ENCODE measurements at regions of chr4 and their contacts with region 1.

Region 1: GRCh38 chr4:81351654-81352445 is 119.9 kb downstream of the RASGEF1B start:
- DNase-seq: peak; percentile 16 to 71 (median 52)
- H3K4me3 ChIP-seq: no peak overlapping the region
- H3K27ac ChIP-seq: no peak overlapping the region
- H3K4me1 ChIP-seq: no peaks in the 10 kb centered on the region
- H3K27me3 ChIP-seq: no peaks in the 10 kb centered on the region
- CTCF ChIP-seq: peak in 2 of 3 donors; percentile 50 to 58
- EP300 ChIP-seq: no peak
- POLR2A ChIP-seq: no peak

Region 2: DNA sequence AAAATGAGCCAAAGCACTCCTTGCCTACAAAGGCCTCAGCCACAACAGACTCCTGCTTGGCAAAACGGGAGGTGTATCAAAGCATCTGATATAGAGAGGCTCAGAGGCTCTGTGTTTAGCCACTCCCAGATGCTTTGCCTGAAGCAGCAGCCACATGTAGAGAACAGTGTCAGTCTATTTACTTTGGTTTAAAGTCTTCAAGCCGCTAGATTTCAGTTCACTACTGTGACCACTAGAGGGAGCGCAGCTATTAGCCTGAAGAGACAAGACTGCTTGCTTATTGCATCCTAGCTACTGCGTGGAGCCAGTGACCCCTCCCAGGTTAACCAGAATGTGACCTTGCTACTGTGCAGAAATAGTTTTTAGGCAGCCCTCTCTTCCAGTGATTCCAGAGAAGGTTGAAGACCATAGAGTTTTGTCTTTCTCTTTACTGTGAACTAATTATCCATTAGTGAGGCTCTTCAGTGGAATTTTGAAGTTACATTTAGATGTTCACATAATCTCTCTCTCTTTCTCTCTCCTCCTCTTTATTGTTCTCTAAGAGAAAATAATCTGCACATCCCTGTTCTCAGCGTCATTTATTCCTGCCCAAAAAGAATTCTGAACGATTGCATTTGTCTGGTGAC is 282.0 kb before region 1 on chr4:
- intact Hi-C with region 1: loop called in 1 of 4 experiments (anchors 5 kb)
- DNase-seq: peak in 4 of 5 donors; percentile 23 to 48 (median 31)
- H3K4me3 ChIP-seq: no peak overlapping the region
- H3K27ac ChIP-seq: no peak overlapping the region
- H3K4me1 ChIP-seq: no peaks in the 10 kb centered on the region
- H3K27me3 ChIP-seq: no peaks in the 10 kb centered on the region
- CTCF ChIP-seq: peak; percentile 23 to 69 (median 62)
- EP300 ChIP-seq: no peak
- POLR2A ChIP-seq: no peak

Region 3: DNA sequence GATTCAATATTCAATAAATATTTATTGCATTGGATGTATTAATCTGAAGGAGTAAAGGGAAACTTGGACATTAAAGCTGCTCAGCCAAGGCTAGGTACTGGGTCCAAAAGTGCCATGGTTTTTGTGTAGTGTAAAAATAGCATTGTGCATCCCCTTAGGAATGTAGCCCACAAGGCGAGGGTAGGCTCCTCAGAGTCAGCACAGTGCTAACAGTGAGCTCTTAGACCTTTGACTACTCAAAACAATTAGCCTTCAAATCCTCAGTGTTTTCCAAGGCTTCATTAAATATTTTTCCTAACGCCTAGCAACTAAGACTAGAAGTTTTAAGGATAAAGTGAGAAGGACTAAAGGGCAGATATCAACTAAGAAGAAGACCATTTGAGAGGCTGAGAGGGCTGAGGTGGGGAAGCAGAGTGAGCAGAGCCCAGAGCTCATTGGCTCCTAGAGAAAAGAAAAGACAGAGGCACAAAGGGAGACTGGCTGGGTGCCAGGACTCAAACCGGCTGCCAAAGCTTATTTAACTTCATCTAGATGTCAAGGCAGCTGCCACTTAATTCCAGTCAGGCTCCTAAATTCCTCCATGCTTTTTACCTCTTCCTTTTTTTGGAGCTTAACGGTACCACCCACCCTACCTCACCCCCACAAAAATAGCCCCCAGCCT is 153.9 kb before region 1 on chr4:
- intact Hi-C with region 1: no loop called
- DNase-seq: no peak
- H3K4me3 ChIP-seq: no peak overlapping the region
- H3K27ac ChIP-seq: no peak overlapping the region
- H3K4me1 ChIP-seq: no peaks in the 10 kb centered on the region
- H3K27me3 ChIP-seq: no peaks in the 10 kb centered on the region
- CTCF ChIP-seq: no peak
- EP300 ChIP-seq: no peak
- POLR2A ChIP-seq: no peak

Region 4: GRCh38 chr4:81335122-81335912 is 16.5 kb before region 1 on chr4:
- intact Hi-C with region 1: loop called in 1 of 4 experiments (anchors 2 kb)
- DNase-seq: no peak
- H3K4me3 ChIP-seq: no peak overlapping the region
- H3K27ac ChIP-seq: no peak overlapping the region
- H3K4me1 ChIP-seq: peaks cover 1% of the 10 kb centered on the region
- H3K27me3 ChIP-seq: no peaks in the 10 kb centered on the region
- CTCF ChIP-seq: no peak
- EP300 ChIP-seq: no peak
- POLR2A ChIP-seq: no peak

Measured in ovary (tissue), 10 donors.